ENCODE measurements at regions of chr1 and their contacts with region 1.

Region 1: DNA sequence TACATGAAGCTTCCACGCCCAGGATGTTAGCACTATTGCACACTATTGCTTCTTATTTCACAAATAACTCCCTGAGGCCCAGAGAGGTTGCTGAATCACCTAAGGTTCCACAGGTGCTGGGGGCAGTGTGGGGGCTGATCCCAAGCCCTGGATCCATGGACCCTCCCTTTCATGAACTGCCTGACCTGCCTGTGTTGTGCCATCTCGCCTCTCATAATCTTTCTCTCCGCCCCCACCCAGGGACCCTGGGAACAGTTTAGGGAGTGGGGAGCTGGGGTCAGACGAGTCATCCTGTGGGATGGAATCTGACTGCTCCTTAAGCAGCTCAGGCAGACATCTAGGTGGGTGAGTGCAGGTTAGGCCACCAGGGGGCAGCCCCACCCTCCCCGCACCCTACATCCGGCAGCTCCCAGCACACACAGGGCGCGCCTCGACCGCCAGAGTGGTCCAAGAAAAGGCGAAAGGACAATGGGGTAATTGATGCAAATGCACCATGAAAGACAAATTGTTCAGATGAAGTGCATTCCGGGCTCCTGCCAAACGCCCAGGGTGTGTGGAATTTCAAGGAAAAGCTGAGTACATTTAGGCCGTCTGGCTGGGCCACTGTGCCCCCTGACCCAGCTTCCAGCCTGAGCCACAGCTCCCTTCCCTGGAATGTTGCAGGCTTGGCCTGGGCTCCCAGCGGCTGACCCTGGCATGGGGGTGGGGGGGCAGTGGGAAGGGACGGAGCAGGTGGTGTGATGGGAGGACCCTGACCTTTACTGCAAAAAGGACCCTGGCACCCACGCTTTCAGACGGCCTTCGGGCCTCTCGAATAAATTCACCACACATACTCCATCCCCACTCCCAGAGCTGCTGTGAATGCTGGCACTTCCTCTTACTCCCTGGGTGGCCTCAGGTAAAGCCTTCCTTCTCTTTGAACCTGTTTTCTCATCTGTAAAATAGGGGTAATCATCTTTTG is 20.8 kb downstream of the PHLDA3 start:
- DNase-seq: peak; percentile 71 to 77 (median 72)
- H3K4me3 ChIP-seq: no peak overlapping the region
- H3K27ac ChIP-seq: no peak overlapping the region
- H3K4me1 ChIP-seq: peaks cover 0 to 20% (median 12%) of the 10 kb centered on the region in 4 experiments
- H3K27me3 ChIP-seq: peaks cover 0 to 1% (median 0%) of the 10 kb centered on the region in 5 experiments

Region 2: DNA sequence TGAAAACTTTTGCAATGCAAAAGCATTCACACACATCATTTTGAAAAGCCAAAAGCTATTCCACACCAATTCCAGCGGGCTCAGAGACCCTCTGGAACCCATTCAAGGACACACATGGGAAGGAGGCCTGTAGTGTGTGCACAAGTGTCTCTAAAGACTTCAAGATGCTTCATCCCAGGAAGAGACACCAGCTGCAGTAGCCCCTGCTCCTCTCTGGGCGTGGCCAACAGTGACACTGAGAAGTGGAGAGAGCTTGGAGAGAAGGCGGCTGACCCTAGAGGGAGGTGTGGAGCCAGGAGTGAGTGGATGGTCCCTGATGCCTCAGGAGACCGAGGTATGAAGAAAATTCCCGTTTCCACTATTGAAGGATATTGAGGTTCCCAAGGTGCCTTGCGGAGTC is 11.8 kb before region 1 on chr1:
- CTCF ChIA-PET with region 1: interaction called, 56 read pairs
- POLR2A ChIA-PET with region 1: no interaction called
- DNase-seq: no peak
- H3K4me3 ChIP-seq: no peak overlapping the region
- H3K27ac ChIP-seq: no peak overlapping the region
- H3K4me1 ChIP-seq: peaks cover 0 to 5% (median 3%) of the 10 kb centered on the region in 4 experiments
- H3K27me3 ChIP-seq: peaks cover 0 to 3% (median 0%) of the 10 kb centered on the region in 5 experiments

Region 3: GRCh38 chr1:201468844-201469511 is 20.8 kb after region 1 on chr1 and contains the start of gene PHLDA3:
- CTCF ChIA-PET with region 1: interaction called, 353 read pairs
- POLR2A ChIA-PET with region 1: no interaction called
- DNase-seq: peak; percentile 70 to 92 (median 90)
- H3K4me3 ChIP-seq: peak within 1 kb of the TSS; percentile 22 to 78 (median 63)
- H3K27ac ChIP-seq: no peak within 1 kb of the TSS
- H3K4me1 ChIP-seq: peaks cover 0 to 25% (median 20%) of the 10 kb centered on the region in 4 experiments
- H3K27me3 ChIP-seq: peaks cover 0 to 11% (median 5%) of the 10 kb centered on the region in 5 experiments

Region 4: DNA sequence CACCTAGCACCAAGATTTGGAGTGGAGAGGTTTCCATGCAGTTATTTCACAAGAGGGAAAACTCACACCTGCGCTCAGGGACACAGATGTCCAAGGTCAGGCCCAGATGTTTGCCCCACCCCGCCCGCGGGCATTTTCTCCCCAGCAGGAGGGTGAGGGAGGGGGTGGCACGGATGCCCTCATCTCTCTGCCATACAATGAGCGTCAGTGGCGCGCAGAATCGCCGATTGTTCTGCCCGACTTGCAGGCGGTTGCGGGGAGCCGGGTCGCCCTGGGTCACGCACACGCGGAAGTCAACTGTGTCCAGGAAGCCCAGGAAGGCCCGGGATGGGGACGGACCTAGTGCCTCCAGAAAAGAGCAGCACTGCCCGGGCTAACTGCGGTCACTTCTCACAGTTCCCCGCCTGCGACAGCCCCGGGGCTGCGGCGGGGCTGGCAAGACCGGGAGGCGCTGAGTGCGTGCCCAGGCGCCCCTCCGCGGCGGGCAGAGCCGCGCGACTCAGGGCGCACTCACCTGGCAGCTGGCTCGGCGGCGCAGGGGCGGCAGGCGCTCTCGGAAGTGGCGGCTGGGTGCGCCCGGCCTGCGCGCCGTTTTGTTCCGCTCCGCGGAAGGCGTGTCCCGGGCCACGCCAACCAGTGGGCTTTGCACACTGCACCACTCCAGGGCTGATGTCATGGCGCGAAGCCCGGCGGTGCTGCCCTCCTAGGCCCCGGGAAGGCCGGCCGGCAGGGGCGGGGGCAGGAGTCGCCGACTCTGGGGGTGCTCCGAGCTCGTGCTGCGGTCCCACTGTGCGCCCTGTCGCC is 58.6 kb after region 1 on chr1 and contains the start of gene CSRP1:
- CTCF ChIA-PET with region 1: interaction called, 126 read pairs
- POLR2A ChIA-PET with region 1: no interaction called
- DNase-seq: peak; percentile 80 to 91 (median 87)
- H3K4me3 ChIP-seq: peak within 1 kb of the TSS; percentile 67 to 86 (median 76)
- H3K27ac ChIP-seq: peak within 1 kb of the TSS; percentile 54 to 72
- H3K4me1 ChIP-seq: peaks cover 1 to 53% (median 43%) of the 10 kb centered on the region in 4 experiments
- H3K27me3 ChIP-seq: no peaks in the 10 kb centered on the region

Region 5: DNA sequence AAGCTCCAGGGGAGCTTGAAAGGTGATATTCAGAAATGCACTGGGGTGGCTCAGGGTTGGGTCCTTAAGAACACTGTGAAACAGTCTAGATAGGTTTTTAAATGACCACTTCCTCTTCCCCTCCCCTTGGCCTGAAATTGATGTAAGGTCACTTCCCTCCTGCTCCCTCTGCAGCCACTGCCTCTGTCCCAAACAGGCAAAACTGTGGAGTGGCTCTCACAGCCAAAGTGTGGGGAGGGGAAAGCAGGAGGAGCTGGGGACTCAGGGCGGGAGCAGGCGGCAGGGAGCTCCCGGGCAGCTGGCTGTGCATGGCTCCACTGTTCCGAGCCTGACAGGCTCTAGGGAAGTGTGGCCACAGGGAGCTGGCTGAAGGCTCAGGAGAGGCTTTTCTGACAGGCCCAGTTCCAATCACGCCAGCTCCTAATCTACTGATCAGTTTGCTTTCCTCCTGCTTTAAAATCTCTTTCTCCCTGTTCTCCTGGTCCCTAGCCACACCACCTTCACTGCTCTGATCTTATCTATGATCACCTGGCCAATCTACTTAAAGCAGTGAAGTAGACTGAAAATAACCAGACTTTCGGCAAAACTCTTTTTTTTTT is 63.8 kb after region 1 on chr1:
- CTCF ChIA-PET with region 1: interaction called, 126 read pairs
- POLR2A ChIA-PET with region 1: interaction called, 3 read pairs
- DNase-seq: peak in 2 of 3 donors; percentile 19 to 23
- H3K4me3 ChIP-seq: no peak overlapping the region
- H3K27ac ChIP-seq: no peak overlapping the region
- H3K4me1 ChIP-seq: peaks cover 0 to 30% (median 22%) of the 10 kb centered on the region in 4 experiments
- H3K27me3 ChIP-seq: no peaks in the 10 kb centered on the region